GM12878 (cell line): ENCODE measurements at regions of chr7 and their contacts with region 1.

Region 1: DNA sequence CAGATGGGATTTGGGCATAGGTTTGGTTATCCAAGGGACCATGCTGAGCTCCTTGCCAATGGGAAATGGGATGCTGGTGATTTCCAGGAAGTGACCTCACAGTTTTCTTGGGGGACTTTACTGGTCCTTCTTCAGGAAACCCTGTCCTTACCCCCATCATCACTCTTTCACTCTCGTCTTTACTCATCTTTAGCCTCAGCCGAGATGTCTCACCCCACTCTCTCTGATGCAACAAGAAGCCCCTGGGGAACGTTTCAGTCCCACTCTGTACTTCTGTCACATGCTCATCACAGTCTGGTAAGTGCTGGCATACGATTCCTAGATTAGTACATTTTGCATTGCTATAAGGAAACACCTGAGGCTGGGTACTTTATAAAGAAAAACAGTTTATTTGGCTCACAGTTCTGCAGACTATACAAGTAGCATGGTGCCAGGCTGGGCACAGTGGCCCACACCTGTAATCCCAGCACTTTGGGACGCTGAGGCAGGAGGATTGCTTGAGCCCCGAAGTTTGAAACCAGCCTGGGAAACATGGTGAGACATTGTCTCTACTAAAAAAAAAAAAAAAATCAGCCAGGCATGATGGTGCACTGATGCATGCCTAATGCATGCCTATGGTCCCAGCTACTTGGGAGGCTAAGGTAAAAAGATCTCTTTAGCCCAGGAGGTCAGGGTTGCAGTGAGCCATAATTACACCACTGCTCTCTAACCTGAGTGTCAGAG is 63.5 kb upstream of the VKORC1L1 start:
- DNase-seq: peak; percentile 95
- ATAC-seq: peak; percentile 91
- H3K4me3 ChIP-seq: peak overlapping the region; percentile 53; the same call in 1 of the 2 replicates
- H3K27ac ChIP-seq: peak overlapping the region; percentile 71
- H3K4me1 ChIP-seq: peaks cover 16% of the 10 kb centered on the region
- H3K27me3 ChIP-seq: no peaks in the 10 kb centered on the region
- CTCF ChIP-seq: no peak
- EP300 ChIP-seq: peak; percentile 71 to 81; a peak in 3 of 4 replicates
- POLR2A ChIP-seq: no peak
- RAD21 ChIP-seq: no peak

Region 2: GRCh38 chr7:65317372-65317771 is 492.0 kb before region 1 on chr7:
- CTCF ChIA-PET with region 1: no interaction called
- POLR2A ChIA-PET with region 1: interaction called, 10 read pairs
- RAD21 ChIA-PET with region 1: no interaction called
- SMC1A ChIA-PET with region 1: no interaction called
- in situ Hi-C with region 1: no loop called
- intact Hi-C with region 1: no loop called
- DNase-seq: no peak
- ATAC-seq: no peak
- H3K4me3 ChIP-seq: no peak overlapping the region
- H3K27ac ChIP-seq: no peak overlapping the region
- H3K4me1 ChIP-seq: no peaks in the 10 kb centered on the region
- H3K27me3 ChIP-seq: no peaks in the 10 kb centered on the region
- CTCF ChIP-seq: no peak
- EP300 ChIP-seq: no peak
- POLR2A ChIP-seq: no peak
- RAD21 ChIP-seq: no peak

Region 3: DNA sequence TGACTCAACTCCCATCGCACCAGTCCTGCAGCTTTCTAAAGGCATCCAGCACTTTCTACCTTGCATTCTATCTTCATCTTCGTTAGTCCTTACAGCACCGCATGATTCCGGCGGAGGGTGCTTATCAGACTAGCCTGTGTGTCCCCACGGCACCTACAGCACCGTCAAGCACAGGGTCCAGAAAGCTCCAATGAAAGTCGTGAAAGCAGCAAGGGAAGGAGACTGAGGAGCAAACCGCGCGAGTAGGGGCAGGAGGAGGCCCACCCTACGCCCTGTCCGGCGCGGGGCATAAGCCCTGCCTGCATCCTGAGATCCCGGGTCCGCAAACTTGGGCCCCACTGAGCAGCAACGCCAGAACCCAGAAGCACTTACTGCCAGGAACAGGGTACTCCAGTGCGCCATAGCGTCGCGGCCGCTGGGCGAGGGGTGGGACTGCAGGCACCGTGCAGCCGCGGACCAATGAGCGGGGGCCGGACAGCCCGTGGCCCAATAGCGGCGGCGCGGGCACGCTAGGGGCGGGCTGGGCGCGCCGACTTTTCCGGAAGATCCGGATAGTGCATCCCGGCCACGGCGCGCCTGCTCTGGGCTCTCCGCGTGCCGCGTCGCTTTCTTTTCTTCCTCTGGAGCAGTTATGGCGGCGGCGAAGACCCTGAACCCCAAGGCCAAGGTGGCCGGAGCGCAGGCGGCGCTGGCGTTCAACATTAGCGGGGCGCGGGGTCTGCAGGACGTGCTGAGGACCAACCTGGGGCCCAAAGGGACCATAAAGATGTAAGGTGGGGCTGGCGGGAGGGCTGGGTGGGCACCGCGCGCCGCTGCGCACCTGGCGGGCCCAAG is 58.7 kb before region 1 on chr7:
- CTCF ChIA-PET with region 1: interaction called, 3 read pairs
- POLR2A ChIA-PET with region 1: interaction called, 4 read pairs
- RAD21 ChIA-PET with region 1: interaction called, 8 read pairs
- SMC1A ChIA-PET with region 1: interaction called, 5 read pairs
- in situ Hi-C with region 1: no loop called
- intact Hi-C with region 1: loop called (anchors 5 kb)
- DNase-seq: peak; percentile 55
- ATAC-seq: peak; percentile 98
- H3K4me3 ChIP-seq: peak overlapping the region; percentile 92
- H3K27ac ChIP-seq: peak overlapping the region; percentile 86
- H3K4me1 ChIP-seq: 0 out of 2 replicates have a peak, but pooled peaks cover 3% of the 10 kb centered on the region
- H3K27me3 ChIP-seq: no peaks in the 10 kb centered on the region
- CTCF ChIP-seq: no peak
- EP300 ChIP-seq: no peak
- POLR2A ChIP-seq: peak; percentile 91
- RAD21 ChIP-seq: no peak

Region 4: GRCh38 chr7:65798111-65799075 is 11.0 kb before region 1 on chr7:
- CTCF ChIA-PET with region 1: interaction called, 4 read pairs
- POLR2A ChIA-PET with region 1: interaction called, 18 read pairs
- RAD21 ChIA-PET with region 1: interaction called, 9 read pairs
- SMC1A ChIA-PET with region 1: interaction called, 12 read pairs
- in situ Hi-C with region 1: no loop called
- intact Hi-C with region 1: no loop called
- DNase-seq: peak; percentile 67
- ATAC-seq: peak; percentile 96
- H3K4me3 ChIP-seq: no peak overlapping the region
- H3K27ac ChIP-seq: peak overlapping the region; percentile 86
- H3K4me1 ChIP-seq: peaks cover 12% of the 10 kb centered on the region
- H3K27me3 ChIP-seq: no peaks in the 10 kb centered on the region
- CTCF ChIP-seq: no peak
- EP300 ChIP-seq: peak; percentile 52 to 83; a peak in 3 of 4 replicates
- POLR2A ChIP-seq: no peak
- RAD21 ChIP-seq: no peak

Region 5: DNA sequence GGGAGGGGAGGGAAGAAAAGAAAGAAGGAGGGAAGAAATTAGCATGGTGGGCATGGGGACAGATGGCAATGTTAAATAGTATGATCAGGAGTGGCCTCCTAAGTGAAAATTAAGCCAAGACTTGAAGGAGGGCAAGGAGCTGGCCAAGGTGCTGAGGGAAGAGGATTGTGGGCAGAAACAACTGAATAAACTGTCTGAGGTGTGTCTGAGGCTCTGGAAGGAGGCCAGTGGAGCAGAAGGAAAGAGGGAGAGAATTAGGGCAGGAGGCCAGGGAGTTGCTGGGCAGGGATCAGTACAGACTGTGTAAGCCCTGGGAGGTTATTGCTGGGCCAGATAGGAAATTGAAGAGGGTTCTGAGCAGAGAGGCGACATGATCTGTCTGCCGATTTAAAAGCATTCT is 22.9 kb after region 1 on chr7:
- CTCF ChIA-PET with region 1: interaction called, 5 read pairs
- POLR2A ChIA-PET with region 1: interaction called, 3 read pairs
- RAD21 ChIA-PET with region 1: interaction called, 12 read pairs
- SMC1A ChIA-PET with region 1: no interaction called
- in situ Hi-C with region 1: no loop called
- intact Hi-C with region 1: no loop called
- DNase-seq: no peak
- ATAC-seq: no peak
- H3K4me3 ChIP-seq: no peak overlapping the region
- H3K27ac ChIP-seq: no peak overlapping the region
- H3K4me1 ChIP-seq: no peaks in the 10 kb centered on the region
- H3K27me3 ChIP-seq: no peaks in the 10 kb centered on the region
- CTCF ChIP-seq: no peak
- EP300 ChIP-seq: no peak
- POLR2A ChIP-seq: no peak
- RAD21 ChIP-seq: no peak

Region 6: GRCh38 chr7:66083677-66084076 is 274.3 kb after region 1 on chr7:
- CTCF ChIA-PET with region 1: no interaction called
- POLR2A ChIA-PET with region 1: no interaction called
- RAD21 ChIA-PET with region 1: no interaction called
- SMC1A ChIA-PET with region 1: no interaction called
- in situ Hi-C with region 1: no loop called
- intact Hi-C with region 1: no loop called
- DNase-seq: no peak
- ATAC-seq: no peak
- H3K4me3 ChIP-seq: no peak overlapping the region
- H3K27ac ChIP-seq: no peak overlapping the region
- H3K4me1 ChIP-seq: no peaks in the 10 kb centered on the region
- H3K27me3 ChIP-seq: no peaks in the 10 kb centered on the region
- CTCF ChIP-seq: no peak
- EP300 ChIP-seq: no peak
- POLR2A ChIP-seq: no peak
- RAD21 ChIP-seq: no peak